H1 (cell line): ENCODE measurements at regions of chr20 and their contacts with region 1.

Region 1: GRCh38 chr20:11716239-11716944 is 201.3 kb upstream of the BTBD3 start:
- DNase-seq: peak in 1 of 2 experiments; percentile 33
- H3K4me3 ChIP-seq: no peak overlapping the region
- H3K27ac ChIP-seq: no peak overlapping the region
- H3K4me1 ChIP-seq: peaks cover 0 to 18% (median 9%) of the 10 kb centered on the region in 4 experiments; a peak in 4 of 7 replicates
- H3K27me3 ChIP-seq: no peaks in the 10 kb centered on the region
- CTCF ChIP-seq: peak; percentile 39 to 96 (median 84)
- EP300 ChIP-seq: no peak
- POLR2A ChIP-seq: no peak
- RAD21 ChIP-seq: peak; percentile 48 to 59

Region 2: DNA sequence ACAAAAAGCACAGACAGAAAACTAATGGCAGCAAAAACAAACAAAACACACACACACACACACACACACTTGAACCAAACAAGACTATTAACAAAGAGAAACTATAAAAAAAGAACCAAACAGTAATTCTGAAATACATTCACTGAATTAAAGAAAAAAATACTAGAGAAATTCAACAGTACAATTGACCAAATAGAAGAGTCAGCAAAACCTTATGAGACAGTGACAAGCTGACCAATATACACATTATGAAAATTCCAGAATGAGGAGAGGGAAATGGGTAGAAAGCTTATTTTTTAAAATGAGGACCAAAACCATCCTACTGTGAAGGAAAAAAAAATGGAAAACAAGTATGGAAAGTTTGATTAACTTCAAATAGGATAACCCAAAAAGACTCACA is 10.9 kb before region 1 on chr20:
- CTCF ChIA-PET with region 1: interaction called, 19 read pairs
- POLR2A ChIA-PET with region 1: no interaction called
- DNase-seq: no peak
- H3K4me3 ChIP-seq: no peak overlapping the region
- H3K27ac ChIP-seq: no peak overlapping the region
- H3K4me1 ChIP-seq: no peaks in the 10 kb centered on the region
- H3K27me3 ChIP-seq: no peaks in the 10 kb centered on the region
- CTCF ChIP-seq: no peak
- EP300 ChIP-seq: no peak
- POLR2A ChIP-seq: no peak
- RAD21 ChIP-seq: no peak